CD8-positive, alpha-beta T cell (primary cell): ENCODE measurements at regions of chr12 and their contacts with region 1.

Region 1: DNA sequence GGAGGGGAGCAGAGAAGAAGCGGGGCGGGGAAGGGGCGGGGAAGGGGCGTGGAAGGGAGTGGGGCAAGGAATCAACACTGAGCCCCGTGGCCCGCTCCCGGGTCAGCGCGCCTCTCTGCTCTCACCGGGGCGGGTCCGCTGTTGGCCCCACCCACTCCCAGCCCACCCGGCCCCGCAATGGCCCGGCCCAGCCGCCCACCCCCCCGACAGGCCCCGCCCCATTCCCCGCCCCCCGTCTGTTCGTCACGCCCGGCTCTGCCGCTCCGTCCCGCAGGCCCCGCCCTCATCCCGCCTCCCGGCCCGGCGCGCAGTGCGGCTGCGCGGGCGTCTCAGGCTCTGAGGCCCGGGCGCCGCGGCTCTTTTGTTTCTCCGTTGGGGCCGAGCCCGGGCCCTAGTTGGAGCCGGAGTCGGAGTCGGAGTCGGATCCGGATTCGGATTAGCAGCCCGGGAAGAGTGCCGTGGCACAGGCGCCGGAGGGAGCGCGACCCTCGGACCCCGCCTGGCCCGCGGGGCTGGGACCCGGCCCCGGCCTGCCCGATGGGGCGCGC is at the start of gene ULK1:
- DNase-seq: peak; percentile 82 to 96 (median 92)
- ATAC-seq: peak; percentile 85
- H3K4me3 ChIP-seq: peak within 1 kb of the TSS; percentile 55 to 77
- H3K4me3 Mint-ChIP-seq: peak within 1 kb of the TSS; percentile 90
- H3K27ac ChIP-seq: peak within 1 kb of the TSS in 1 of 2 experiments; percentile 43
- H3K27ac Mint-ChIP-seq: peak within 1 kb of the TSS; percentile 79
- H3K4me1 ChIP-seq: peaks cover 16% of the 10 kb centered on the region
- H3K4me1 Mint-ChIP-seq: peaks cover 18% of the 10 kb centered on the region
- H3K27me3 ChIP-seq: no peaks in the 10 kb centered on the region
- H3K27me3 Mint-ChIP-seq: no peaks in the 10 kb centered on the region
- CTCF ChIP-seq: no peak
- total RNA-seq, gene ULK1: 76.6 to 79.9 TPM

Region 2: GRCh38 chr12:130992448-130992847 is 901.9 kb before region 1 on chr12:
- CTCF ChIA-PET with region 1: no interaction called
- POLR2A ChIA-PET with region 1: no interaction called
- intact Hi-C with region 1: no loop called
- DNase-seq: no peak
- ATAC-seq: no peak
- H3K4me3 ChIP-seq: no peak overlapping the region
- H3K4me3 Mint-ChIP-seq: no peak overlapping the region
- H3K27ac ChIP-seq: no peak overlapping the region
- H3K27ac Mint-ChIP-seq: no peak overlapping the region
- H3K4me1 ChIP-seq: no peaks in the 10 kb centered on the region
- H3K4me1 Mint-ChIP-seq: no peaks in the 10 kb centered on the region
- H3K27me3 ChIP-seq: no peaks in the 10 kb centered on the region
- H3K27me3 Mint-ChIP-seq: peaks cover 29% of the 10 kb centered on the region
- CTCF ChIP-seq: no peak

Region 3: GRCh38 chr12:131720921-131721320 is 173.5 kb before region 1 on chr12:
- CTCF ChIA-PET with region 1: no interaction called
- POLR2A ChIA-PET with region 1: no interaction called
- intact Hi-C with region 1: no loop called
- DNase-seq: no peak
- ATAC-seq: no peak
- H3K4me3 ChIP-seq: no peak overlapping the region
- H3K4me3 Mint-ChIP-seq: no peak overlapping the region
- H3K27ac ChIP-seq: no peak overlapping the region
- H3K27ac Mint-ChIP-seq: no peak overlapping the region
- H3K4me1 ChIP-seq: no peaks in the 10 kb centered on the region
- H3K4me1 Mint-ChIP-seq: peaks cover 17% of the 10 kb centered on the region
- H3K27me3 ChIP-seq: no peaks in the 10 kb centered on the region
- H3K27me3 Mint-ChIP-seq: no peaks in the 10 kb centered on the region
- CTCF ChIP-seq: no peak

Region 4: GRCh38 chr12:131928711-131929580 is 34.6 kb after region 1 on chr12 and contains the start of gene PUS1:
- CTCF ChIA-PET with region 1: no interaction called
- POLR2A ChIA-PET with region 1: interaction called, 6 read pairs
- intact Hi-C with region 1: loop called (anchors 1 kb)
- DNase-seq: peak; percentile 87 to 97 (median 93)
- ATAC-seq: peak; percentile 88
- H3K4me3 ChIP-seq: peak within 1 kb of the TSS; percentile 90 to 96
- H3K4me3 Mint-ChIP-seq: peak within 1 kb of the TSS; percentile 91
- H3K27ac ChIP-seq: peak within 1 kb of the TSS; percentile 63 to 73
- H3K27ac Mint-ChIP-seq: peak within 1 kb of the TSS; percentile 87
- H3K4me1 ChIP-seq: peaks cover 11% of the 10 kb centered on the region
- H3K4me1 Mint-ChIP-seq: peaks cover 18% of the 10 kb centered on the region
- H3K27me3 ChIP-seq: no peaks in the 10 kb centered on the region
- H3K27me3 Mint-ChIP-seq: no peaks in the 10 kb centered on the region
- CTCF ChIP-seq: no peak
- total RNA-seq, gene PUS1: 17.5 to 17.9 TPM

Region 5: GRCh38 chr12:132018193-132018916 is 124.0 kb after region 1 on chr12:
- CTCF ChIA-PET with region 1: no interaction called
- POLR2A ChIA-PET with region 1: no interaction called
- intact Hi-C with region 1: no loop called
- DNase-seq: no peak
- ATAC-seq: no peak
- H3K4me3 ChIP-seq: no peak overlapping the region
- H3K4me3 Mint-ChIP-seq: no peak overlapping the region
- H3K27ac ChIP-seq: no peak overlapping the region
- H3K27ac Mint-ChIP-seq: no peak overlapping the region
- H3K4me1 ChIP-seq: no peaks in the 10 kb centered on the region
- H3K4me1 Mint-ChIP-seq: no peaks in the 10 kb centered on the region
- H3K27me3 ChIP-seq: no peaks in the 10 kb centered on the region
- H3K27me3 Mint-ChIP-seq: no peaks in the 10 kb centered on the region
- CTCF ChIP-seq: no peak